GM10248 (cell line): ENCODE measurements at regions of chr12 and their contacts with region 1.

Region 1: GRCh38 chr12:74317078-74317601 is 220.5 kb upstream of the ATXN7L3B start:
- DNase-seq: no peak
- CTCF ChIP-seq: no peak

Region 2: GRCh38 chr12:74264692-74265091 is 52.4 kb before region 1 on chr12:
- CTCF ChIA-PET with region 1: no interaction called
- POLR2A ChIA-PET with region 1: no interaction called
- DNase-seq: no peak
- CTCF ChIP-seq: no peak

Region 3: DNA sequence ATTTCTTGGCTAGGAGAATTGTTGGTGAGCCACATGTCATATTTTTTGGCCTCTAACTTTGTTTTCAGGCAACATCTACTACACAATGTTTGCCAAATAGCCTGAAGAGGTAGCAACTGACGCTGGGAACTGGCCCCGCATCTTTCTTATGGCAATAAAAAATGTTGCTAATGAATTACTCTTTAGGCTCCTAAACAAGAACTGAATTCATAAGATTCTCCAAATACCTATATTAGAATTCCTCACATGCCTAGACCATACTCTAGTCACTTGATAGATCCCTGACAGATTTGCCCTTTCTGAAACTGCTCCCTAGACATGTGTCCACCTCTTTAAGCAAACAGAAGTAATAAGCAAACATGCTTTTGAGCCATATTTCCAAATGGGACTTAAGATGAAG is 11.5 kb after region 1 on chr12:
- CTCF ChIA-PET with region 1: interaction called, 12 read pairs
- POLR2A ChIA-PET with region 1: no interaction called
- DNase-seq: no peak
- CTCF ChIP-seq: no peak